WTC11 (cell line): ENCODE measurements at regions of chr2 and their contacts with region 1.

Region 1: GRCh38 chr2:36376319-36376765 is 20.8 kb downstream of the CRIM1 start:
- DNase-seq: no peak
- ATAC-seq: peak; percentile 45
- H3K4me3 Mint-ChIP-seq: peak overlapping the region; percentile 40
- H3K27ac Mint-ChIP-seq: peak overlapping the region; percentile 86
- H3K4me1 Mint-ChIP-seq: peaks cover 91% of the 10 kb centered on the region
- H3K27me3 Mint-ChIP-seq: no peaks in the 10 kb centered on the region
- CTCF ChIP-seq: no peak

Region 2: GRCh38 chr2:36389091-36389564 is 12.8 kb after region 1 on chr2:
- CTCF ChIA-PET with region 1: interaction called, 12 read pairs
- POLR2A ChIA-PET with region 1: no interaction called
- DNase-seq: no peak
- ATAC-seq: peak; percentile 51
- H3K4me3 Mint-ChIP-seq: no peak overlapping the region
- H3K27ac Mint-ChIP-seq: peak overlapping the region; percentile 64
- H3K4me1 Mint-ChIP-seq: peaks cover 73% of the 10 kb centered on the region
- H3K27me3 Mint-ChIP-seq: no peaks in the 10 kb centered on the region
- CTCF ChIP-seq: no peak